ENCODE measurements at regions of chr15 and their contacts with region 1.

Region 1: DNA sequence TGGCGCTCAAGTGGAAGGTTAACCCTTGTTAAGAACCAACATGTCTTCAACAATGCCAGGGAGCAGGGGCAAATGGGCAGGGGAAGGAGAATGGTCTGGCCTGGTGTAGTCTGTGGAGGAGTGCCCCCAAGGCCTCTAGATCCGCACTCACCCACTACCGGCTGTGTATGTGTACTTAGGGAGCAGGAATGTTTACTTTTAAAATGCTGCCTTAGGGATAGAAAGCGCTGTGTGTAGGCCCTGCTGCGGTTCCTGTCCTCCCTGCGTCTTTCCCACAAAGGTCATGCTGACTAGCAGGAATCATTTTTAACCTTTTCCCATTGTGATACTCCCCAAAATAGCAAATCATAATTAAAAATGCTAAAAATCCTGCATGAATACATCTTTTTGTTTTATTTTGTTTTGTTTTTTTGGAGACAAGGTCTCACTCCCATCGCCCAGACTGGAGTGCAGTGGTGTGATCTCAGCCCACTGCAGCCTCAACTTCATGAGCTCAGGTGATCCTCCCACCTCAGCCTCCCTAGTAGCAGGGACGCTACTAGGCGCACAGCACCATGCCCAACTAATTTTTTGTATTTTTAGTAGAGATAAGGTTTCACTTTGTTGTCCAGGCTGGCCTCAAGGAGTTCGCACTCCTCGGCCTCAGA is 35.9 kb upstream of the CEMIP start:
- DNase-seq: peak; percentile 86
- ATAC-seq: peak; percentile 97
- H3K4me3 ChIP-seq: no peak overlapping the region
- H3K27ac ChIP-seq: peak overlapping the region; percentile 91
- H3K4me1 ChIP-seq: peaks cover 38% of the 10 kb centered on the region
- H3K27me3 ChIP-seq: no peaks in the 10 kb centered on the region
- CTCF ChIP-seq: no peak

Region 2: GRCh38 chr15:80580106-80580505 is 163.2 kb before region 1 on chr15:
- CTCF ChIA-PET with region 1: no interaction called
- POLR2A ChIA-PET with region 1: no interaction called
- intact Hi-C with region 1: loop called (anchors 10 kb)
- DNase-seq: peak; percentile 96
- ATAC-seq: peak; percentile 97
- H3K4me3 ChIP-seq: no peak overlapping the region
- H3K27ac ChIP-seq: peak overlapping the region; percentile 97
- H3K4me1 ChIP-seq: peaks cover 32% of the 10 kb centered on the region
- H3K27me3 ChIP-seq: no peaks in the 10 kb centered on the region
- CTCF ChIP-seq: no peak

Region 3: DNA sequence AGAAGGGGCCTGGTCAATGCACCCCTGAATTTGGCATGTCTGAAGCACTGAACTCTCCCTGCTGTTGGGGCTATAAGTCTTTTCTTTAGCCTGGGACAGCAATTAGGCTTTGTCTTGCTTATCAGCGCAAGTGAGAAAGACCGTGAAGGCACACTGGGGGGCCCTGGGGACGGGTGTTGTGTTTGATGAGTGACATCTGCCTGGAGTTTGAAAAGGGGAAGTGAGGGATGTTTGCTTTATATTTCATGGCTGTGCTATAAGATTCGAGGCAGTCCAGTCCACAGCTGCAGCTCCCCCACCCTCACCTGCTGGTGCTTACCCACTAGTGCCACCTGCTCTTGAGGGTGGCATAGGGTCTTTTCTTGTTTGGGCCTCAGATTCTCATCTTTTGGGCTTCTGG is 80.7 kb after region 1 on chr15:
- CTCF ChIA-PET with region 1: no interaction called
- POLR2A ChIA-PET with region 1: no interaction called
- intact Hi-C with region 1: no loop called
- DNase-seq: no peak
- ATAC-seq: no peak
- H3K4me3 ChIP-seq: no peak overlapping the region
- H3K27ac ChIP-seq: no peak overlapping the region
- H3K4me1 ChIP-seq: no peaks in the 10 kb centered on the region
- H3K27me3 ChIP-seq: no peaks in the 10 kb centered on the region
- CTCF ChIP-seq: no peak